ENCODE measurements at regions of chr16 and their contacts with region 1.

Region 1: DNA sequence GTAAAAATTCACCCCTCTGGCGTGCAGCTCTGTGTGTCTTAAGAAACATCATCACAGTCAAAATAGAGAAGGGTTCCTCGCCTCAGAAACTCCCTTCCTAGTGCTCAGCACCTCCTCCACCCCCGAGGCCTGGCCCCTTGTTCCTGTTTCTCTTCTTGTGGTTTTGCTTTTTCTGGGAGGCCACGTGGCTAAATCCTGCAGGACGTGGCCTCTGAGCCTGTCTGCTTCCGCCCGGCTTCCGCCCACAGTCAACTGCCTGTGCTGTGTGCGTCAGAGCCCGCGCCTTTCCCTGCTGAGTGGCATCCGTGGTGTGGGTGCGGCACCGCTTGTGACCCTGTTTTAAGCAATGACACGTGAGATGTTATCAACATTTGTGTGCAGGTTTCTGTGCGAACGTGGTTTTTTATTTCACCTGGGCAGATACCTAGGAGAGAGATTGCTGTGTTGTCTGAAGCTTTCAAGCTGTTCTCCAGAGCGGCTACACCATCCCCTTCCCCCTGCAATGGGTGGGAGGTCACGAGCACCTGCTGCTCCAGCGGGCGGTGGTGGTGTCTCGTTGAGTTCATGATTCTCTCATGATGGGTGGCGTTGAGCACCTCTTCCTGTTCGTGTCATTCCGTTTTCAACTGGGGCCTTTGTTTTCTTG is 21.7 kb downstream of the ACSF3 start:
- DNase-seq: peak in 13 of 14 experiments; percentile 85 to 97 (median 89)
- ATAC-seq: peak; percentile 82
- H3K4me3 ChIP-seq: peak overlapping the region; percentile 56
- H3K4me3 Mint-ChIP-seq: peak overlapping the region; percentile 77
- H3K27ac ChIP-seq: peak overlapping the region; percentile 72 to 79
- H3K27ac Mint-ChIP-seq: no peak overlapping the region
- H3K4me1 ChIP-seq: peaks cover 75% of the 10 kb centered on the region
- H3K4me1 Mint-ChIP-seq: peaks cover 54% of the 10 kb centered on the region
- H3K27me3 ChIP-seq: no peaks in the 10 kb centered on the region
- H3K27me3 Mint-ChIP-seq: no peaks in the 10 kb centered on the region
- CTCF ChIP-seq: no peak

Region 2: GRCh38 chr16:88941913-88942909 is 173.1 kb before region 1 on chr16:
- CTCF ChIA-PET with region 1: no interaction called
- POLR2A ChIA-PET with region 1: no interaction called
- intact Hi-C with region 1: loop called in 1 of 2 experiments (anchors 5 kb)
- DNase-seq: peak; percentile 31 to 79 (median 51)
- ATAC-seq: peak; percentile 74
- H3K4me3 ChIP-seq: no peak overlapping the region
- H3K4me3 Mint-ChIP-seq: peak overlapping the region; percentile 56
- H3K27ac ChIP-seq: no peak overlapping the region
- H3K27ac Mint-ChIP-seq: no peak overlapping the region
- H3K4me1 ChIP-seq: peaks cover 40% of the 10 kb centered on the region
- H3K4me1 Mint-ChIP-seq: peaks cover 8% of the 10 kb centered on the region
- H3K27me3 ChIP-seq: peaks cover 45 to 53% of the 10 kb centered on the region in 2 experiments
- H3K27me3 Mint-ChIP-seq: peaks cover 48% of the 10 kb centered on the region
- CTCF ChIP-seq: peak; percentile 58

Region 3: GRCh38 chr16:89093602-89094251 is 21.6 kb before region 1 on chr16 and contains the start of gene ACSF3:
- CTCF ChIA-PET with region 1: interaction called, 9 read pairs
- POLR2A ChIA-PET with region 1: interaction called, 102 read pairs
- intact Hi-C with region 1: loop called (anchors 1 kb)
- DNase-seq: peak; percentile 26 to 85 (median 58)
- ATAC-seq: peak; percentile 3
- H3K4me3 ChIP-seq: peak within 1 kb of the TSS; percentile 65
- H3K4me3 Mint-ChIP-seq: peak within 1 kb of the TSS; percentile 97
- H3K27ac ChIP-seq: peak within 1 kb of the TSS; percentile 24 to 37
- H3K27ac Mint-ChIP-seq: peak within 1 kb of the TSS; percentile 99
- H3K4me1 ChIP-seq: peaks cover 52% of the 10 kb centered on the region
- H3K4me1 Mint-ChIP-seq: peaks cover 48% of the 10 kb centered on the region
- H3K27me3 ChIP-seq: peaks cover 9 to 16% of the 10 kb centered on the region in 2 experiments
- H3K27me3 Mint-ChIP-seq: peaks cover 13% of the 10 kb centered on the region
- CTCF ChIP-seq: no peak
- total RNA-seq, gene ACSF3: 44.7 to 49.5 TPM

Region 4: DNA sequence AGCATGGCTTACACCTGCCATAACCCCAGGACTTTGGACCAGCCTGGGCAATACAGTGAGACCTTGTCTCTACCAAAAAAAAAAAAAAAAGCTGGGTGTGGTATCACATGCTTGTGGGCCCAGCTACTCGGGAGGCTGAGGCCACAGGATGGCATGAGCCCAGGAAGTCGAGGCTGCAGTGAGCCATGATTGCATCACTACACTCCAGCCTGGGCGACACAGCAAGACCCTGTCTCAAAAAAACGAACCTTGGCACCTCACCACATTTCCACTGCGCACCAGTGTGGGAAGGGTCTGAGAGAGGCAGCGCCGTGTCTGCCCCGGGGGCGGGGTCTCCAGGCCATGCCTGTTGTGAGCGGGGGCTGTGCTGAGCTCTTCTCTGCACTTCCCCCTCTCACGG is 15.4 kb before region 1 on chr16:
- CTCF ChIA-PET with region 1: interaction called, 9 read pairs
- POLR2A ChIA-PET with region 1: interaction called, 102 read pairs
- intact Hi-C with region 1: loop called (anchors 1 kb)
- DNase-seq: peak in 2 of 14 experiments; percentile 27 to 57
- ATAC-seq: no peak
- H3K4me3 ChIP-seq: no peak overlapping the region
- H3K4me3 Mint-ChIP-seq: peak overlapping the region; percentile 58
- H3K27ac ChIP-seq: no peak overlapping the region
- H3K27ac Mint-ChIP-seq: peak overlapping the region; percentile 99
- H3K4me1 ChIP-seq: peaks cover 82% of the 10 kb centered on the region
- H3K4me1 Mint-ChIP-seq: peaks cover 78% of the 10 kb centered on the region
- H3K27me3 ChIP-seq: no peaks in the 10 kb centered on the region
- H3K27me3 Mint-ChIP-seq: no peaks in the 10 kb centered on the region
- CTCF ChIP-seq: no peak

Region 5: DNA sequence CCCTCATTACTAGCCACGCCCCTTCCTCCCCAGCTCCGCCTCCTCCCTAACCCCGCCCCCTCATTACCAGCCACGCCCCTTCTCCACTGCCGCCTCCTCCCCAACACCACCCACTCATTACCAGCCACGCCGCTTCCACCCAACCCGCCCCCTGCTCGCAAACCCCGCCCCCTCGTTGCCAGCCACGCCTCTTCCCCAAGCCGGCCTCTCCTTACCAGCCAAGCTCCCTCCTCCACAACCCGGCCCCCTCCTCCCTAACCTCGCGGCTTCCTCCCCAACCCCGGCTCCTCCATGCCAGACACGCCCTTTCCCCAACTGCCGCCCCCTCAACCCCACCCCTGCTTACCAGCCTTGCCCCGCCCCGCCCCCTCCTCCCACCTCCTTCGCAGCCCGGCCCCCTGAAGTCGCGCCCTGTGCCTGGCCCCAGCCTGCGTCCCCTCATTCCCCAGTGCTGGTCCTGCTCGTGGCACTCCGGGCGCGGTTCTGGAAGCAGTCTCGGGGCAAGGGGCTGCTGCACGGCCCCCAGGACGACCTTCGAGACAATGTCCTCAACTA is 77.8 kb after region 1 on chr16:
- CTCF ChIA-PET with region 1: no interaction called
- POLR2A ChIA-PET with region 1: interaction called, 5 read pairs
- intact Hi-C with region 1: loop called in 1 of 2 experiments (anchors 1 kb)
- DNase-seq: peak in 6 of 14 experiments; percentile 26 to 80 (median 60)
- ATAC-seq: peak; percentile 50
- H3K4me3 ChIP-seq: no peak overlapping the region
- H3K4me3 Mint-ChIP-seq: no peak overlapping the region
- H3K27ac ChIP-seq: no peak overlapping the region
- H3K27ac Mint-ChIP-seq: no peak overlapping the region
- H3K4me1 ChIP-seq: peaks cover 18% of the 10 kb centered on the region
- H3K4me1 Mint-ChIP-seq: peaks cover 4% of the 10 kb centered on the region
- H3K27me3 ChIP-seq: no peaks in the 10 kb centered on the region
- H3K27me3 Mint-ChIP-seq: peaks cover 5% of the 10 kb centered on the region
- CTCF ChIP-seq: no peak

Measured in CD4-positive, alpha-beta T cell (primary cell).